Endothelial cell of umbilical vein (primary cell): ENCODE measurements at regions of chr17 and their contacts with region 1.

Region 1: DNA sequence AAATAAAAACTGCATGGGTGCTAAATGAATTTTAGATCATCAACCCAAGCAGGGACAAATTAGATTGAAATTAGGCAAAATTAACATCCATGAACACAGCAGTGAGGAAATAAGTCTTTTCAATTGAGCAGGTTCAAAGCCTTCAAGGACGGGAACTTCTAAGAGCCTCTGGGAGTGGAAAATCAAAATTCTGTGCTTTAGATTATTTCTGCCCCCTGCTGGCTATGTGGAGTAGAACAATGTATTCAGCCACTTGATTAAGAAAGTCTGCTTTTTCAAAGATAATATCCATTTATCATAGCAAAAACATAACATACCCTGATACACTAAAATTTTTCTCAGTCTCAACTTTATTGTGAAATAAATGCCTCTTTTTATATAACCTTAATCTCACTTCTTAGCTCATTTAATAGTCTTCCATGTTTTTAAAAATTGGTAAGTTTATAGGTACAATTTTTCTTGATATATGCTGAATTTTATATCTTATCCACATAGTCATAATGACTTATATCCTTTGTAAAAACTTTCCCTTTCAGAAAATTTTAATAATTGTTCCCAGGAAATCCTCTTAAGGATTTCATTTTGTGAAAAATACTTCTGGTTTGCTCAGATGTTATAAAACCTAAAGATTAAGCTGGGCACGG is 28.1 kb upstream of the NOL11 start:
- DNase-seq: peak; percentile 76
- H3K4me3 ChIP-seq: no peak overlapping the region
- H3K27ac ChIP-seq: no peak overlapping the region
- H3K4me1 ChIP-seq: no peaks in the 10 kb centered on the region
- H3K27me3 ChIP-seq: no peaks in the 10 kb centered on the region
- CTCF ChIP-seq: peak; percentile 52 to 54
- POLR2A ChIP-seq: no peak

Region 2: GRCh38 chr17:67559377-67559966 is 130.2 kb before region 1 on chr17:
- CTCF ChIA-PET with region 1: interaction called, 5 read pairs
- POLR2A ChIA-PET with region 1: no interaction called
- dilution Hi-C with region 1: no loop called
- intact Hi-C with region 1: loop called (anchors 5 kb)
- DNase-seq: no peak
- H3K4me3 ChIP-seq: no peak overlapping the region
- H3K27ac ChIP-seq: no peak overlapping the region
- H3K4me1 ChIP-seq: no peaks in the 10 kb centered on the region
- H3K27me3 ChIP-seq: no peaks in the 10 kb centered on the region
- CTCF ChIP-seq: peak; percentile 10 to 13
- POLR2A ChIP-seq: no peak

Region 3: DNA sequence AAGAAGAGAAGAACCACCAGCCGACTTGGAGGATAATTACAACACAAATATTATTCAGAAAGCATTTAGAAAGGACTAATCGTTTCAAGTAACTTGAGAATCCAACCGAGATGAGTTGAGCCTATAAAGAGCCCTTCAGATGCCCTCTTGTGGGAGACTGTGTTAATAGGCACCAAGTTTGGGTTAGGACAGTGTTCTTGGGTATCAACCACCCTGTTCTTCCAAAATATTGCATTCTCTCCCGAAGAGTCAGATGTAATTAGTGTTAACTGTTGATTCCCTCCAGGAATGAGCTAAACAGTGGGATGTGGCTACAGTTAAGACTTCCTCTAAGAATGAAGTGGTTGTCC is 59.7 kb before region 1 on chr17:
- CTCF ChIA-PET with region 1: no interaction called
- POLR2A ChIA-PET with region 1: no interaction called
- dilution Hi-C with region 1: no loop called
- intact Hi-C with region 1: loop called (anchors 5 kb)
- DNase-seq: peak; percentile 33
- H3K4me3 ChIP-seq: no peak overlapping the region
- H3K27ac ChIP-seq: no peak overlapping the region
- H3K4me1 ChIP-seq: peaks cover 13% of the 10 kb centered on the region
- H3K27me3 ChIP-seq: no peaks in the 10 kb centered on the region
- CTCF ChIP-seq: peak in 1 of 2 donors; percentile 28
- POLR2A ChIP-seq: no peak

Region 4: GRCh38 chr17:67746704-67747571 is 57.3 kb after region 1 on chr17:
- CTCF ChIA-PET with region 1: no interaction called
- POLR2A ChIA-PET with region 1: no interaction called
- dilution Hi-C with region 1: no loop called
- intact Hi-C with region 1: no loop called
- DNase-seq: peak; percentile 48
- H3K4me3 ChIP-seq: no peak overlapping the region
- H3K27ac ChIP-seq: no peak overlapping the region
- H3K4me1 ChIP-seq: peaks cover 4% of the 10 kb centered on the region
- H3K27me3 ChIP-seq: no peaks in the 10 kb centered on the region
- CTCF ChIP-seq: no peak
- POLR2A ChIP-seq: no peak